CD8-positive, alpha-beta T cell (primary cell): ENCODE measurements at regions of chr12 and their contacts with region 1.

Region 1: DNA sequence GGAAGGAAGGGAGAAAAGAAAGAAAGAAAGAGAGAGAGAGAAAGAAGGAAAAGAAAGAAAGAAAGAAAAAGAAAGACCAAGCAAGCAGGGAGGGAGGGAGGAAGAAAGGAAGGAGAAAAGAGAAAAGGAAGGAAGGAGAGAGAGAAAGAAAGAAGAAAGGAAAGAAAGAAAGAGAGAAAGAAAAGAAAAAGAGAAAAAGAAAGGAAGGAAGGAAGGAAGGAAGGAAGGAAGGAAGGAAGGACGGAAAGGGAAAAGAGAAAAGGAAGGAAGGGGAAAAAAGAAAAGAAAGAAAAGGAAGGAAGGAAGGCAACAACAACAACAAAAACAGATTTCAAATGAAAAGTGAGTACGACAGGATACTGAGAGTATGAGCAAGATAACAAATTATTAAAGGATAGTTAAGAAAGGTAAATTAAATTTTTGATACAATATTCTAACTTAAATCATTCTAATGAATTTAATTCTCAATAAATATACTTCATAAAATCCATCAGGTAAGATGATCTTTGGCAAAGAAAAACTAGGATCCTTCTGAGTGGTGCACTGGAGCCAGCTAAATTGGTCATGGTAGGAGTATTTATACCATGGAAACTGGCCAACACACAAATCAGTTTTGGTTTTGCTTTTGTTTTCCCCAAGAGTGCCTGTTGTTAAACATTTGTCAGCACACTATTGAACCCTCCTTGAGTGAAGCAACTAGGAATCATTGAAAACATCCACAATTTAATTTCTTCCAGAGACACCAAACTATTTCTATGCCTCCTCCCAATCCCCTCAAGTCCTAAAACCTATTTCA is 56.1 kb upstream of the DYRK2 start:
- DNase-seq: peak in 2 of 9 experiments; percentile 43 to 65
- ATAC-seq: no peak
- H3K4me3 ChIP-seq: no peak overlapping the region
- H3K4me3 Mint-ChIP-seq: peak overlapping the region; percentile 50
- H3K27ac ChIP-seq: peak overlapping the region in 1 of 2 experiments; percentile 49
- H3K27ac Mint-ChIP-seq: peak overlapping the region; percentile 81
- H3K4me1 ChIP-seq: peaks cover 47% of the 10 kb centered on the region
- H3K4me1 Mint-ChIP-seq: peaks cover 60% of the 10 kb centered on the region
- H3K27me3 ChIP-seq: no peaks in the 10 kb centered on the region
- H3K27me3 Mint-ChIP-seq: no peaks in the 10 kb centered on the region
- CTCF ChIP-seq: peak; percentile 16

Region 2: DNA sequence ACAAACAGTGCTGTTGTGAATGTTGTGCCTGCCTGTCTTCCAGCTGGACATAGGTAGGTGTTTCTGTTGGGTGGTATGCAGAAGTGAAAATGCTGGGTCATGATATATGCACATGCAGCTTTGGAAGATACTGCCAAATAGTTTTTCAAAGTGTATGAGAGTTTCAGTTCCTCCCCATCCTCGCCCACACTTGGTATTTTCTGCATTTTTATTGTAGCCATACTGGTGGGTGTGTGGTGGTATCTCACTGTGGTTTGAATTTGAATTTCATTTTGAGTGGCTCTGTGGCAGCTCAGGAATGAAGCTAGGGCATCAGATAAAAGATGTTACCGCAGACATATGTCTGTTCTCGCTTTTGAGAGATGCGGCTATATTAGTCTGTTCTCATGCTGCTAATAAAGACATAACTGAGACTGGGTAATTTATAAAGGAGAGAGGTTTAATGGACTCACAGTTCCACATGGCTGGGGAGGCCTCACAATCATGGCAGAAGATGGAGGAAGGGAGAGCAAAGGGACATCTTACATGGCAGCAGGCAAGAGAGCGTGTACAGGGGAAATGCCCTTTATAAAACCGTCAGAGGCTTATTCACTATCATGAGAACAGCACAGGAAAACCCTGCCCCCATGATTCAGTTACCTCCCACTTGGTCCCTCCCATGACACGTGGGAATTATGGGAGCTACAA is 140.2 kb before region 1 on chr12:
- CTCF ChIA-PET with region 1: no interaction called
- POLR2A ChIA-PET with region 1: no interaction called
- intact Hi-C with region 1: loop called in 1 of 2 experiments (anchors 5 kb)
- DNase-seq: peak in 1 of 9 experiments; percentile 13
- ATAC-seq: no peak
- H3K4me3 ChIP-seq: no peak overlapping the region
- H3K4me3 Mint-ChIP-seq: no peak overlapping the region
- H3K27ac ChIP-seq: no peak overlapping the region
- H3K27ac Mint-ChIP-seq: no peak overlapping the region
- H3K4me1 ChIP-seq: peaks cover 18% of the 10 kb centered on the region
- H3K4me1 Mint-ChIP-seq: peaks cover 54% of the 10 kb centered on the region
- H3K27me3 ChIP-seq: no peaks in the 10 kb centered on the region
- H3K27me3 Mint-ChIP-seq: no peaks in the 10 kb centered on the region
- CTCF ChIP-seq: no peak

Region 3: GRCh38 chr12:67482751-67483671 is 109.4 kb before region 1 on chr12:
- CTCF ChIA-PET with region 1: interaction called, 4 read pairs
- POLR2A ChIA-PET with region 1: no interaction called
- intact Hi-C with region 1: loop called in 1 of 2 experiments (anchors 5 kb)
- DNase-seq: peak; percentile 46 to 91 (median 85)
- ATAC-seq: peak; percentile 91
- H3K4me3 ChIP-seq: no peak overlapping the region
- H3K4me3 Mint-ChIP-seq: peak overlapping the region; percentile 12
- H3K27ac ChIP-seq: peak overlapping the region; percentile 23 to 58
- H3K27ac Mint-ChIP-seq: peak overlapping the region; percentile 80
- H3K4me1 ChIP-seq: peaks cover 40% of the 10 kb centered on the region
- H3K4me1 Mint-ChIP-seq: peaks cover 45% of the 10 kb centered on the region
- H3K27me3 ChIP-seq: no peaks in the 10 kb centered on the region
- H3K27me3 Mint-ChIP-seq: no peaks in the 10 kb centered on the region
- CTCF ChIP-seq: no peak

Region 4: DNA sequence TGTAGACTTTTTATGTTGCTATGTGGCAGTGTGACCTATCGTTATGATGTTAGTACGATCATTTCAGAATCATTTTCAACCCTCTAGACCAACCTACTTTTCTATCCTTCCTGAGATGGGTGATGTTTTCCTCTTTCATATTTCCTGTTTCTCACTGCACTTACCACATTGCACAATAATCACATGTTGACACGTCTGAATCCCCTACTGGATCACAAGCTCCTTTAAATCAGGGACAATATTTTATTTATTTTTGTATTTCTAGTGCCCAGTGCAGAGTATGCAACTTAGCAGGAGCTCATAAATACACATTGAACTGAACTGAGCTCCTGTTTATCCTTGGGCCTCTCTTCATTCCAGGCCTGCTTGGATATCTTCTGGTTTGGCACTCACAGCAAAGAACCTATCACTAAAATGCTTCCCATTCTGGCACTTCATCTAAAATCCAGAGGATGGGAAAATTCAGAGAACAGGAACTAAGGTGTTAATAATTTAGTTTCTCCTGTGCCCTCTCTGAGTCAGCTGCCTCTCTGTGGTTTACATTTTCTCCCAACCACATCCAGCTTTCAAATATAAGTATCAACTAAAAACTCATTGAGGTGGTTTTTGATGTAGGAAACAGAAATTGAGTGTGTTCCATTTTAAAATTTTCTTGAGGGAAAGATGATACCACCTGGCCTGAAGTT is 13.3 kb before region 1 on chr12:
- CTCF ChIA-PET with region 1: interaction called, 5 read pairs
- POLR2A ChIA-PET with region 1: interaction called, 30 read pairs
- intact Hi-C with region 1: loop called in 1 of 2 experiments (anchors 2 kb)
- DNase-seq: peak in 6 of 9 experiments; percentile 4 to 71 (median 28)
- ATAC-seq: peak; percentile 78
- H3K4me3 ChIP-seq: peak overlapping the region; percentile 4 to 21
- H3K4me3 Mint-ChIP-seq: peak overlapping the region; percentile 56
- H3K27ac ChIP-seq: peak overlapping the region; percentile 11 to 76
- H3K27ac Mint-ChIP-seq: peak overlapping the region; percentile 69
- H3K4me1 ChIP-seq: peaks cover 34% of the 10 kb centered on the region
- H3K4me1 Mint-ChIP-seq: peaks cover 57% of the 10 kb centered on the region
- H3K27me3 ChIP-seq: no peaks in the 10 kb centered on the region
- H3K27me3 Mint-ChIP-seq: no peaks in the 10 kb centered on the region
- CTCF ChIP-seq: no peak

Region 5: GRCh38 chr12:67625004-67625403 is 32.6 kb after region 1 on chr12:
- CTCF ChIA-PET with region 1: interaction called, 13 read pairs
- POLR2A ChIA-PET with region 1: interaction called, 12 read pairs
- intact Hi-C with region 1: loop called (anchors 1 to 5 kb)
- DNase-seq: no peak
- ATAC-seq: no peak
- H3K4me3 ChIP-seq: no peak overlapping the region
- H3K4me3 Mint-ChIP-seq: no peak overlapping the region
- H3K27ac ChIP-seq: no peak overlapping the region
- H3K27ac Mint-ChIP-seq: peak overlapping the region; percentile 22
- H3K4me1 ChIP-seq: peaks cover 44% of the 10 kb centered on the region
- H3K4me1 Mint-ChIP-seq: peaks cover 58% of the 10 kb centered on the region
- H3K27me3 ChIP-seq: no peaks in the 10 kb centered on the region
- H3K27me3 Mint-ChIP-seq: no peaks in the 10 kb centered on the region
- CTCF ChIP-seq: no peak

Region 6: DNA sequence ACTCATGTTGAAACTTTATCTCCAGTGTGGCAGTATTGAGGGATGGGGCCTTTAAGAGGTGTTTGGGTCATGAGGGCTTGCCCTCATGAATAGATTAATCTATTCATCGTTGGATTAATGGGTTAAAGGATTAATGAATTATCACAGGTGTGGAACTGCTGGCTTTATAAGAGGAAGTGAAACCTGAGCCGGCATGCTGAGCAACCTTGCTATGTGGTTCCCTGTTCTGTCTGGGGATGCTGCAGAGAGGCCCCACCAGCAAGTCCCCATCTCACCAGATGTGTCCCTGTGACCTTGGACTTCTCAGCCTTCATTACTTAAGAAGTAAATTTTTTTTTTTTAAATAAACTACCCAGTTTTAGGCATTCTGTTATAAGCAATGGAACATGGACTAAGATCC is 165.7 kb after region 1 on chr12:
- CTCF ChIA-PET with region 1: no interaction called
- POLR2A ChIA-PET with region 1: no interaction called
- intact Hi-C with region 1: no loop called
- DNase-seq: no peak
- ATAC-seq: no peak
- H3K4me3 ChIP-seq: no peak overlapping the region
- H3K4me3 Mint-ChIP-seq: no peak overlapping the region
- H3K27ac ChIP-seq: no peak overlapping the region
- H3K27ac Mint-ChIP-seq: no peak overlapping the region
- H3K4me1 ChIP-seq: no peaks in the 10 kb centered on the region
- H3K4me1 Mint-ChIP-seq: peaks cover 11% of the 10 kb centered on the region
- H3K27me3 ChIP-seq: no peaks in the 10 kb centered on the region
- H3K27me3 Mint-ChIP-seq: no peaks in the 10 kb centered on the region
- CTCF ChIP-seq: no peak

Region 7: GRCh38 chr12:67943226-67943892 is 350.9 kb after region 1 on chr12:
- CTCF ChIA-PET with region 1: interaction called, 11 read pairs
- POLR2A ChIA-PET with region 1: no interaction called
- intact Hi-C with region 1: no loop called
- DNase-seq: peak; percentile 30 to 80 (median 69)
- ATAC-seq: peak; percentile 78
- H3K4me3 ChIP-seq: no peak overlapping the region
- H3K4me3 Mint-ChIP-seq: no peak overlapping the region
- H3K27ac ChIP-seq: no peak overlapping the region
- H3K27ac Mint-ChIP-seq: no peak overlapping the region
- H3K4me1 ChIP-seq: no peaks in the 10 kb centered on the region
- H3K4me1 Mint-ChIP-seq: peaks cover 7% of the 10 kb centered on the region
- H3K27me3 ChIP-seq: no peaks in the 10 kb centered on the region
- H3K27me3 Mint-ChIP-seq: peaks cover 6% of the 10 kb centered on the region
- CTCF ChIP-seq: peak; percentile 83